ENCODE measurements at regions of chr13 and their contacts with region 1.

Region 1: DNA sequence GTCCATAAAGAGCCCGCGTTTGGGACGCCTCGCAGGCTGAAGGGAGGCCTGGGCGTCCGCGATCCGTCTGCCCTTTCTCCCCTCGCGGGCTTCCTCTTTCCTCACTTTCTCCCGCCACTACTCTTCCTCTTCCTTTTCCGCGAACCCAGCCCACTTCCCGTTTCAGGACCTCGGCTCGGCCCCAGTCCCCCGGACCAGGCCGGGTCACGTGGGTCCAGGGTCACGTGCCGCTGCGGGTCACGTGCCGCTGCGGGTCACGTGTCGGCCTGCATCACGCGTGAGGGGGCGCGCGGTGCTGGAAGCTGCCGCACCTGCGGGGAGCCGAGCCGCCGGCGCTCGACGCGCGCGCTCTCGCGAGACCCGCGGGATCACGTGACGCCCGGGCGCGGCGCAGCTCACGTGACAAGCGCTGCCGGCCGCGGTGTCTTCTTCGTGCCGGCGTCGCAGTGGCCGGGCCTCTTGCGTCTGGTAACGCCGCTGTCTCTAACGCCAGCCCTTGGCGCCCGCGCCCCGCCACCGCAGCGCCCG is at the start of gene LAMP1:
- DNase-seq: peak; percentile 95 to 100 (median 99)
- H3K4me3 ChIP-seq: peak within 1 kb of the TSS; percentile 73 to 80
- H3K4me3 Mint-ChIP-seq: peak within 1 kb of the TSS; percentile 95 to 99 (median 97)
- H3K27ac ChIP-seq: peak within 1 kb of the TSS; percentile 90
- H3K27ac Mint-ChIP-seq: peak within 1 kb of the TSS; percentile 96 to 100 (median 99)
- H3K4me1 ChIP-seq: peaks cover 41% of the 10 kb centered on the region
- H3K4me1 Mint-ChIP-seq: peaks cover 29 to 47% (median 38%) of the 10 kb centered on the region in 4 donors
- H3K27me3 ChIP-seq: no peaks in the 10 kb centered on the region
- H3K27me3 Mint-ChIP-seq: peaks cover 14% of the 10 kb centered on the region in 2 donors
- total RNA-seq, gene LAMP1: 119 to 126 TPM

Region 2: GRCh38 chr13:112689303-112690165 is 607.4 kb before region 1 on chr13 and contains the start of gene ATP11A:
- CTCF ChIA-PET with region 1: no interaction called
- POLR2A ChIA-PET with region 1: no interaction called
- intact Hi-C with region 1: loop called (anchors 10 kb)
- DNase-seq: peak; percentile 77 to 85 (median 82)
- H3K4me3 ChIP-seq: peak within 1 kb of the TSS; percentile 58 to 73
- H3K4me3 Mint-ChIP-seq: peak within 1 kb of the TSS; percentile 87 to 95 (median 91)
- H3K27ac ChIP-seq: peak within 1 kb of the TSS; percentile 87
- H3K27ac Mint-ChIP-seq: peak within 1 kb of the TSS; percentile 88 to 95 (median 92)
- H3K4me1 ChIP-seq: peaks cover 44% of the 10 kb centered on the region
- H3K4me1 Mint-ChIP-seq: peaks cover 42 to 62% (median 48%) of the 10 kb centered on the region in 4 donors
- H3K27me3 ChIP-seq: no peaks in the 10 kb centered on the region
- H3K27me3 Mint-ChIP-seq: no peaks in the 10 kb centered on the region
- total RNA-seq, gene ATP11A: 50.2 to 50.5 TPM

Region 3: DNA sequence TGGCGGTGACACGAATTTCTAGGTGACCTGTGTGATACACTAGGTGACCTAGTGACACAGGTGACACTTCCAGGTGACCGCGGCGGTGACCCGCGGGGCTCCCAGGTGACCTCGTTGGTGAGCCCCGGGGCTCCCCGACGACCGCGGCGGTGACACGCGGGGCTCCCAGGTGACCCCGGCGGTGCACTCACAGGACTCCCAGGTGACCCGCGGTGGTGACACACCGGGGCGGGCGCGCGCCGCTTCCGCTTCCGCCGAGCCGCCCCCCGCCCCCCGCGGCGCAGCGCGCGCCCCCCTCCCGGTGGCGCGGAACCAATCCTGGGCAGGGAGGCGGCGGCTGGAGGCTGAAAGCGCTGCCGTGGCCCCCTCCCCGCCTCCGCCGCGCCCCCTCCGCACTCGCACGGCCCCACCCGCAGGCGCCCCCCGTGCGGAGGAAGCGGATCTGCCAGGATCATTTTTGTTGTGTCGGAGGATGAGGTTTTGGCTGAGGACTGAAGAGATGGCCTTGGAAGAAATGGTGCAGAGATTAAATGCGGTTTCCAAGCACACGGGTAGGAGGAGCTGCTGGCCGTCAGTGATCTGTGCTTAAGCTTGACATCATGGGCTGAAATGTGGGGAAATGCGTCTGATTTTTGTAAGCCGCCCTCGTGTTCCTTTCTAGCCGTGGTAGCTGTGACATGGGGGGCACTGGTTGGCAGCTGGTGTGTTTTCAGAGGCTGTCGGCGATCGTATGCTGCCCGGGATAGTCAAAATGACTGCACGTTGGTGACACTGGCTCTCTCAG is 327.8 kb before region 1 on chr13 and contains the start of gene MCF2L:
- CTCF ChIA-PET with region 1: no interaction called
- POLR2A ChIA-PET with region 1: no interaction called
- intact Hi-C with region 1: loop called (anchors 2 kb)
- DNase-seq: peak; percentile 68 to 79 (median 76)
- H3K4me3 ChIP-seq: peak within 1 kb of the TSS; percentile 62 to 64
- H3K4me3 Mint-ChIP-seq: peak within 1 kb of the TSS; percentile 91 to 98 (median 96)
- H3K27ac ChIP-seq: peak within 1 kb of the TSS; percentile 57
- H3K27ac Mint-ChIP-seq: peak within 1 kb of the TSS; percentile 89 to 97 (median 94)
- H3K4me1 ChIP-seq: peaks cover 18% of the 10 kb centered on the region
- H3K4me1 Mint-ChIP-seq: peaks cover 19 to 38% (median 29%) of the 10 kb centered on the region in 4 donors
- H3K27me3 ChIP-seq: no peaks in the 10 kb centered on the region
- H3K27me3 Mint-ChIP-seq: no peaks in the 10 kb centered on the region
- total RNA-seq, gene MCF2L: 17.5 to 18.9 TPM

Region 4: DNA sequence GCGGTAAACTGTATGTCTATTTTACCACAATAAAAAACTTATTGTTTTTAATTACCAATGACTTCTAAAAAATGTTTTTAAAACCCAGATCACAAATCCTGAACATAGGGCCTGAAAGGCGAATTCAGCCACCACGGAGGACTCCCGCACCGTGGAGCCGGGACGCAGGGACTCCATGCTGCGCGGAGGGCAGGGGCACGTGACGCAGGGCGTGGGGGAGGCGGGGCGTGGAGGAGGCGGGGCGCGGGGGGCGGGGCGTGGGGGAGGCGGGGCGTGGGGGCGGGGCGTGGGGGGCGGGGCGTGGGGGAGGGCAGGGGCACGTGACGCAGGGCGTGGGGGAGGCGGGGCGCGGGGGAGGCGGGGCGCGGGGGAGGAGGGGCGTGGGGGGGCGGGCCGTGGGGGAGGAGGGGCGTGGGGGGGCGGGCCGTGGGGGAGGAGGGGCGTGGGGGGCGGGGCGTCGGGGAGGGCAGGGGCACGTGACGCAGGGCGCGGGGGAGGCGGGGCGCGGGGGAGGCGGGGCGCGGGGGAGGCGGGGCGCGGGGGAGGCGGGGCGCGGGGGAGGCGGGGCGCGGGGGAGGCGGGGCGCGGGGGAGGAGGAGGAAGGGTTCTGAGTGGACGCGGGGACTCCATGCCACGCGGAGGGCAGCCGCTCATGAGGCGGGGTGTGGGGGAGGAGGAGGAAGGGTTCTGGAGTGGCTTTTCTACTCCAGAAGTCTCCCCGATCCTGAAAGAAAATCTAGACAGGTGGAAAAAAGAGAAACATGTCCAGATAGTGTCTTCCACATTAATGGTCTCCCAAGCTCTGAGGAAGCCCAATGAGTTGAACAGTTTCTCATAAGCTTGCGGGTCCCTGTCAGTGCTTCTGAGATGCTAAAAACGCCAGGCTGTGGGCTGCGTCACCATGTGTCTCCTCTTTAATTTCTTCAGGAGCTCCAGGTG is 142.8 kb before region 1 on chr13:
- CTCF ChIA-PET with region 1: no interaction called
- POLR2A ChIA-PET with region 1: no interaction called
- intact Hi-C with region 1: loop called (anchors 2 kb)
- DNase-seq: peak; percentile 57 to 76 (median 75)
- H3K4me3 ChIP-seq: peak overlapping the region; percentile 73 to 93
- H3K4me3 Mint-ChIP-seq: peak overlapping the region; percentile 83 to 89 (median 86)
- H3K27ac ChIP-seq: peak overlapping the region; percentile 49
- H3K27ac Mint-ChIP-seq: peak overlapping the region; percentile 87 to 98 (median 96)
- H3K4me1 ChIP-seq: peaks cover 23% of the 10 kb centered on the region
- H3K4me1 Mint-ChIP-seq: peaks cover 7 to 26% (median 20%) of the 10 kb centered on the region in 4 donors
- H3K27me3 ChIP-seq: no peaks in the 10 kb centered on the region
- H3K27me3 Mint-ChIP-seq: no peaks in the 10 kb centered on the region

Region 5: GRCh38 chr13:113187263-113187669 is 109.6 kb before region 1 on chr13:
- CTCF ChIA-PET with region 1: no interaction called
- POLR2A ChIA-PET with region 1: no interaction called
- intact Hi-C with region 1: no loop called
- DNase-seq: peak in 1 of 5 donors; percentile 63
- H3K4me3 ChIP-seq: no peak overlapping the region
- H3K4me3 Mint-ChIP-seq: peak overlapping the region in 7 of 8 donors; percentile 52 to 83 (median 59)
- H3K27ac ChIP-seq: peak overlapping the region; percentile 16
- H3K27ac Mint-ChIP-seq: peak overlapping the region in 6 of 7 donors; percentile 46 to 91 (median 86)
- H3K4me1 ChIP-seq: peaks cover 43% of the 10 kb centered on the region
- H3K4me1 Mint-ChIP-seq: peaks cover 29 to 54% (median 39%) of the 10 kb centered on the region in 4 donors
- H3K27me3 ChIP-seq: no peaks in the 10 kb centered on the region
- H3K27me3 Mint-ChIP-seq: no peaks in the 10 kb centered on the region

Region 6: DNA sequence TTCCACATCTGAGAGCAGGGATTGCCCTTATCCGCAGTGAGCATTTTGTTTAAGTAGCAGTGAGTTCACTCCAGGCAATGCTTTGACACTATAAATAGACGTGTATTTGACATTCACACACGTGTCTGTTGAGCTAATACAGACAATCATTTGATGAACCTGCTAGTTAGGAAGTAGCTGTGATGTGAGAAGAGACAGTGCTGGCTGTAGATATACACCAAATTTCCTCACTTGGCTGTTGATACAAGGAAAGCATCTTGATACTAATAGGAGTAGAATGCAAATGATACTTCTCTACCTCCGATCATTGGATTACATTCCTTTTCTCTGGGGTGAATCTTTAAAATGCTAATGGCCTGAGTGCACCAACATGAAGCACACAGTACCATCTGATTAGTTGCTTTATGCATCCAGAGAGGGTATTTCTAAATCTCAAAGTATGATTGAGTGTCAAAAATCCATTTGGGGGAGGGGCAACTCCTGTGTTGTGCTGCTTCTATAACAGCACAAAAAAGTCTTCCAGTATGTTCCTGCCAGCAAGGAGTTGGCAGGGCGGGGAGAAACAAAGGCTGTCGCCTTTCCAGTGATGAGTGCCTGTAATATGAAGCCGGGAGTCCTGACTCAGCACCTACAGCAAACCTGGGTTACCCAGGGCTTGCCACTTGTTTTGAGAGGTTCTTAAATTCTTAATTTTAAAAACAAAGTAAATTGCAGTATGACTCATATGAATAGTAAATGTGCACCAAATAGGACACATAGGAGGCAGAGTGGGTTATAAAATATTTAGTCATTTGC is 80.5 kb before region 1 on chr13:
- CTCF ChIA-PET with region 1: no interaction called
- POLR2A ChIA-PET with region 1: no interaction called
- intact Hi-C with region 1: no loop called
- DNase-seq: no peak
- H3K4me3 ChIP-seq: no peak overlapping the region
- H3K4me3 Mint-ChIP-seq: no peak overlapping the region
- H3K27ac ChIP-seq: no peak overlapping the region
- H3K27ac Mint-ChIP-seq: peak overlapping the region in 1 of 7 donors; percentile 68
- H3K4me1 ChIP-seq: peaks cover 60% of the 10 kb centered on the region
- H3K4me1 Mint-ChIP-seq: peaks cover 14 to 35% (median 29%) of the 10 kb centered on the region in 4 donors
- H3K27me3 ChIP-seq: no peaks in the 10 kb centered on the region
- H3K27me3 Mint-ChIP-seq: no peaks in the 10 kb centered on the region

Region 7: GRCh38 chr13:113258321-113259054 is 38.4 kb before region 1 on chr13:
- CTCF ChIA-PET with region 1: no interaction called
- POLR2A ChIA-PET with region 1: no interaction called
- intact Hi-C with region 1: no loop called
- DNase-seq: no peak
- H3K4me3 ChIP-seq: no peak overlapping the region
- H3K4me3 Mint-ChIP-seq: no peak overlapping the region
- H3K27ac ChIP-seq: no peak overlapping the region
- H3K27ac Mint-ChIP-seq: peak overlapping the region in 2 of 7 donors; percentile 45 to 68
- H3K4me1 ChIP-seq: no peaks in the 10 kb centered on the region
- H3K4me1 Mint-ChIP-seq: no peaks in the 10 kb centered on the region
- H3K27me3 ChIP-seq: no peaks in the 10 kb centered on the region
- H3K27me3 Mint-ChIP-seq: no peaks in the 10 kb centered on the region

Region 8: GRCh38 chr13:113490496-113491417 is 193.9 kb after region 1 on chr13 and contains the start of gene DCUN1D2:
- CTCF ChIA-PET with region 1: no interaction called
- POLR2A ChIA-PET with region 1: no interaction called
- intact Hi-C with region 1: loop called (anchors 2 kb)
- DNase-seq: peak; percentile 60 to 80 (median 66)
- H3K4me3 ChIP-seq: peak within 1 kb of the TSS; percentile 11 to 65
- H3K4me3 Mint-ChIP-seq: peak within 1 kb of the TSS; percentile 89 to 95 (median 92)
- H3K27ac ChIP-seq: peak within 1 kb of the TSS; percentile 57
- H3K27ac Mint-ChIP-seq: peak within 1 kb of the TSS; percentile 78 to 94 (median 92)
- H3K4me1 ChIP-seq: peaks cover 45% of the 10 kb centered on the region
- H3K4me1 Mint-ChIP-seq: peaks cover 30 to 73% (median 56%) of the 10 kb centered on the region in 4 donors
- H3K27me3 ChIP-seq: no peaks in the 10 kb centered on the region
- H3K27me3 Mint-ChIP-seq: no peaks in the 10 kb centered on the region
- total RNA-seq, gene DCUN1D2: 31.9 to 34.8 TPM

Measured in CD4-positive, alpha-beta memory T cell (primary cell).